AG04450 (cell line): ENCODE measurements at regions of chr17 and their contacts with region 1.

Region 1: GRCh38 chr17:48472411-48473281 is 42.6 kb upstream of the SKAP1 start:
- DNase-seq: peak; percentile 52
- H3K4me3 ChIP-seq: no peak overlapping the region
- H3K27ac ChIP-seq: peak overlapping the region; percentile 59
- H3K27me3 ChIP-seq: no peaks in the 10 kb centered on the region
- CTCF ChIP-seq: no peak

Region 2: GRCh38 chr17:48441231-48441711 is 31.4 kb before region 1 on chr17:
- CTCF ChIA-PET with region 1: no interaction called
- POLR2A ChIA-PET with region 1: no interaction called
- DNase-seq: no peak
- H3K4me3 ChIP-seq: no peak overlapping the region
- H3K27ac ChIP-seq: no peak overlapping the region
- H3K27me3 ChIP-seq: peaks cover 44% of the 10 kb centered on the region
- CTCF ChIP-seq: no peak

Region 3: GRCh38 chr17:48483471-48484131 is 11.0 kb after region 1 on chr17:
- CTCF ChIA-PET with region 1: no interaction called
- POLR2A ChIA-PET with region 1: interaction called, 12 read pairs
- DNase-seq: peak; percentile 97
- H3K4me3 ChIP-seq: peak overlapping the region; percentile 26
- H3K27ac ChIP-seq: peak overlapping the region; percentile 99
- H3K27me3 ChIP-seq: no peaks in the 10 kb centered on the region
- CTCF ChIP-seq: no peak

Region 4: DNA sequence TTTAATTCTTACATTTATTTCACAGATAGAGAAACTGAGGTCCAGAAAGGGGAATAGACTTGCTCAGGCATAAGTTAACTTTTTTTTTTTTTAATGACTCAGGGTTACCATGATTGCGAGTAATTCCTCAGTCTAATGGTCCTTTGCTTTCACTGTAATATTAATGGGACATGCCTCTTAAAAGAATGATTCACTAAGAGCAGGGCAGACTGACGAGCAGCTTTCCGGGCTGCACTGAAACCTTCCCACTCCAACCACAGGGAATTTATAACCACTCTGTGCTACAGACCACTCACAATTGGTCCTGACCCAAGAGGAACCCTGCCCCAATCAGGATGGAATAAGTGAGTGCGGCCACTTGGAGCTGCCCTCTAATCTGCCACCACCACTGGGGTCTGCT is 66.5 kb after region 1 on chr17:
- CTCF ChIA-PET with region 1: no interaction called
- POLR2A ChIA-PET with region 1: no interaction called
- DNase-seq: no peak
- H3K4me3 ChIP-seq: no peak overlapping the region
- H3K27ac ChIP-seq: peak overlapping the region; percentile 63
- H3K27me3 ChIP-seq: no peaks in the 10 kb centered on the region
- CTCF ChIP-seq: no peak

Region 5: GRCh38 chr17:48575066-48575582 is 102.5 kb after region 1 on chr17:
- CTCF ChIA-PET with region 1: no interaction called
- POLR2A ChIA-PET with region 1: no interaction called
- DNase-seq: no peak
- H3K4me3 ChIP-seq: peak overlapping the region; percentile 90
- H3K27ac ChIP-seq: peak overlapping the region; percentile 91
- H3K27me3 ChIP-seq: no peaks in the 10 kb centered on the region
- CTCF ChIP-seq: no peak